GM12878 (cell line): ENCODE measurements at regions of chr10 and their contacts with region 1.

Region 1: GRCh38 chr10:80444646-80445319 is 9.3 kb upstream of the TSPAN14 start:
- DNase-seq: peak; percentile 63
- ATAC-seq: peak; percentile 89
- H3K4me3 ChIP-seq: no peak overlapping the region
- H3K27ac ChIP-seq: no peak overlapping the region
- H3K4me1 ChIP-seq: peaks cover 17% of the 10 kb centered on the region
- H3K27me3 ChIP-seq: no peaks in the 10 kb centered on the region
- CTCF ChIP-seq: peak; percentile 90 to 99 (median 93)
- EP300 ChIP-seq: no peak
- POLR2A ChIP-seq: no peak
- RAD21 ChIP-seq: peak; percentile 100

Region 2: DNA sequence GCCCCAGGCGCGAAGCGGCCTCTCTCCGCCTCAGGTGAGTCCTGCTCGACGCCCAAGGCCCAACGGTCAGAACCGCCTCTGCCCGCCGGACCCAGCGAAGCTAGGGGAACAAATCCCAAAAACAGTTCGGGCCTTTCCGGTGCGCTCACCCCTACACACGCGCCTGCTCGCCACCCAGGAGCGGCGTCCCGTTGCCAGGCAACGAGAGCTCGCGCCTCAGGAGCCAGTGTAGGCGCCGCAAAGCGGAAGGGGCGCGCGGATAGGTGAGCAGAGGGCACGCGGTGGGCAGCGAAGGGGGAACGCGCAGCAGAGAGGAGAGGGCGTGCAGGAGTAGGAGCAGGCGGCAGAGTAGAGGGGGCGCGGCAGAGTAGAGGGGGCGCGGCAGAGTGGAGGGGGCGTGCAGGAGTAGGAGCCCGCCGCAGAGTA is 88.2 kb before region 1 on chr10 and contains the starts of genes DYDC1 and DYDC2:
- CTCF ChIA-PET with region 1: no interaction called
- POLR2A ChIA-PET with region 1: no interaction called
- RAD21 ChIA-PET with region 1: no interaction called
- SMC1A ChIA-PET with region 1: no interaction called
- in situ Hi-C with region 1: no loop called
- intact Hi-C with region 1: no loop called
- DNase-seq: no peak
- ATAC-seq: no peak
- H3K4me3 ChIP-seq: no peak within 1 kb of the TSS
- H3K27ac ChIP-seq: no peak within 1 kb of the TSS
- H3K4me1 ChIP-seq: no peaks in the 10 kb centered on the region
- H3K27me3 ChIP-seq: peaks cover 5 to 11% of the 10 kb centered on the region in 2 experiments
- CTCF ChIP-seq: no peak
- EP300 ChIP-seq: no peak
- POLR2A ChIP-seq: no peak
- RAD21 ChIP-seq: no peak
- polyA plus RNA-seq, gene DYDC1: not detected
- polyA plus RNA-seq, gene DYDC2: not detected

Region 3: GRCh38 chr10:80421707-80422536 is 22.9 kb before region 1 on chr10:
- CTCF ChIA-PET with region 1: interaction called, 32 read pairs
- POLR2A ChIA-PET with region 1: interaction called, 5 read pairs
- RAD21 ChIA-PET with region 1: interaction called, 14 read pairs
- SMC1A ChIA-PET with region 1: interaction called, 26 read pairs
- in situ Hi-C with region 1: no loop called
- intact Hi-C with region 1: no loop called
- DNase-seq: peak; percentile 40
- ATAC-seq: peak; percentile 92
- H3K4me3 ChIP-seq: peak overlapping the region; percentile 23; the same call in 1 of the 2 replicates
- H3K27ac ChIP-seq: peak overlapping the region; percentile 47
- H3K4me1 ChIP-seq: peaks cover 21% of the 10 kb centered on the region
- H3K27me3 ChIP-seq: no peaks in the 10 kb centered on the region
- CTCF ChIP-seq: no peak
- EP300 ChIP-seq: no peak
- POLR2A ChIP-seq: no peak
- RAD21 ChIP-seq: no peak

Region 4: DNA sequence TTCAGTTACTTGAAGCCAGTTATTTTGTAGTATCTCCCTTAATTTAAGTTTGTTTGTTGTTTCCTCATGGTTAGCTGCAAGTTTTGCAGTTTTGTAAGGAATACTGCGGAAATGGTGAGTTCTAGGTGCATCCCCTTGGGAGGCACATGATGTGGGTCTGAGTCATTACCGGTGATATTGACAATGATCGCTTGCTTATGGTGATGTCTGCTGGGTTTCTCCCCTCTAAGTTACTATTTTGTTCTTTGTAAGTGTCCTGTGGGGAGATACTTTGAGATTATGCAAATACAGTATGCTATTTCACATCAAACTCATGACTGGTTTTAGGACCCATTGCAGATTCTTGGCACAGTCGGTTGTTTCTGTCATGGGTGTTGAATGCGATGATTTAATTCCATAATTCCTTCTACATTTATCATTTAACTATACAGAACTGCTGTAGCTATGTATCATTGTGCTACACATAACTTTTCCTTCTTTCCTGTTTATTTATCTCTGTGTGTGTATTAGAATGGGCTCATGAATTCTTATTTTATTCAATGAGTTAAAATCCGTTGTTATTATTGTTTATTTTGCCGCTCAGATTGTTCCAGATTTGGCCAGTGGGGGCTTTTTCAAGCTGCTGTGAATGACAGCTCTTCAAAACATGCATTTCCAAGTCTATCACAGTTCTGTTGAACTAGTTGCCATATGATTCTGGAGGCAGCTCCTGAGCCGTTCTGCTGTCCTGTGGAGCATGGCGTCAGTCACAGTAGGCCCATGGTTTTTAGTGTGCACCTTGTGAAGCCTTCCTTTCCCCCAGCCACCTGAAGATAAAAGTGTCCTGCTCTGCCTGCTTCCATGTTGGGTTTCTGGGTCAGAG is 27.7 kb after region 1 on chr10:
- CTCF ChIA-PET with region 1: interaction called, 24 read pairs
- POLR2A ChIA-PET with region 1: interaction called, 8 read pairs
- RAD21 ChIA-PET with region 1: interaction called, 11 read pairs
- SMC1A ChIA-PET with region 1: interaction called, 87 read pairs
- in situ Hi-C with region 1: no loop called
- intact Hi-C with region 1: no loop called
- DNase-seq: peak; percentile 92
- ATAC-seq: peak; percentile 88
- H3K4me3 ChIP-seq: peak overlapping the region; percentile 35
- H3K27ac ChIP-seq: peak overlapping the region; percentile 87
- H3K4me1 ChIP-seq: peaks cover 65% of the 10 kb centered on the region
- H3K27me3 ChIP-seq: no peaks in the 10 kb centered on the region
- CTCF ChIP-seq: no peak
- EP300 ChIP-seq: peak; percentile 66 to 67; a peak in 2 of 4 replicates
- POLR2A ChIP-seq: no peak
- RAD21 ChIP-seq: no peak

Region 5: DNA sequence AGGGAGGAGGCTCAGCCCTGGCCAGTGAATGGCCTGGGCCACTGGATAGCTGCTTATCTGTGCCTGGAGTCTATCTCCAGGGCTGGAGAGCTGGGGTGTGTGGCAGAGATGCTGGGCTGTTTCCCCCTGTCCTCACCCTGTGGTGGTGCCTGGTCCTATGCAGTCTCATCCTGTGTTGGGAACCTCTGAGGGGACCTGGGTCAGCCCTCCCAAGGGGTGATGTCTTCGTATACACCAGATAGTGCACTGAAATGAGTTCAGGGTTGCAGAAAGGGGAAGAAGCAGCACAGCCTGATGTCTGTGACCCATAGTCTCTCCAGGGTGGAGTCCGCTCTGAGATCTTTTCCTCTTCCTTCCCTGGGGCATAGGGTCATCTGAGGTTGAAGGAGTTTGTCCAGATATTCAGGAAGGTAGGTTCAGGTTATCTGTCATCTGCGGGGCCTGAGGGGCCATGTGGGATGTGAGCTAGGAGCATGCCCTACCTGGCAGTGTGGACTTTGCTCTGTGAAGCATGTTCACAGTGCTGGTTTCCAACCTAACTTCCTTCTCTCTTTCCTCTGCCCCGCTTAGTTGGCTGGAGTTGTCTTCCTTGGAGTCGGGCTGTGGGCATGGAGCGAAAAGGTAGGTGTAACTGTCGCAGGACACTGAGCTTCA is 59.5 kb after region 1 on chr10:
- CTCF ChIA-PET with region 1: interaction called, 852 read pairs
- POLR2A ChIA-PET with region 1: interaction called, 29 read pairs
- RAD21 ChIA-PET with region 1: interaction called, 432 read pairs
- SMC1A ChIA-PET with region 1: interaction called, 1,038 read pairs
- in situ Hi-C with region 1: loop called (anchors 5 kb)
- intact Hi-C with region 1: loop called (anchors 1 kb)
- DNase-seq: no peak
- ATAC-seq: no peak
- H3K4me3 ChIP-seq: no peak overlapping the region
- H3K27ac ChIP-seq: no peak overlapping the region
- H3K4me1 ChIP-seq: peaks cover 31% of the 10 kb centered on the region
- H3K27me3 ChIP-seq: no peaks in the 10 kb centered on the region
- CTCF ChIP-seq: no peak
- EP300 ChIP-seq: no peak
- POLR2A ChIP-seq: no peak
- RAD21 ChIP-seq: no peak

Region 6: DNA sequence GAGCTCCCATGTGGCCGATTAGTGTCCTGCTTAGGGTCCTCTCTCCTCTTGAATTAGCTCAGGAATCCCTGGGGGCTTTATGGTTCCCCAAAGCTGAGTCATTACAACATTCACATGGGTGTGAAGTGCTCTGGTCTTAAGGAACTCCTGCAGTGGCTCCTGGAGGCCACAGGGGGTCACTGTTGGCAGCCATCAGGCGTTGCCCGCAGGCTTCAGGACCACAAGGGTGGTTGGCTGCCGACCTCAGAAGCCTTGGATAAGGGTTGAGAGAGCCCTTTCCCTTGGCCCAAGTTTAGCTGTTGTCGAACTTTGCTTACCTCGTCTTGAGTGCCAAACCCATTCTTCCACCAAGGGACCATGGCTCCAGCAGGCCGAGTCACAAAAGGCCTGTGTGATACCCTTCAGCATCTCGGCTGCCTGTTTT is 154.7 kb after region 1 on chr10:
- CTCF ChIA-PET with region 1: interaction called, 34 read pairs
- POLR2A ChIA-PET with region 1: interaction called, 4 read pairs
- RAD21 ChIA-PET with region 1: interaction called, 26 read pairs
- SMC1A ChIA-PET with region 1: interaction called, 24 read pairs
- in situ Hi-C with region 1: loop called (anchors 10 kb)
- intact Hi-C with region 1: loop called (anchors 2 kb)
- DNase-seq: peak; percentile 57
- ATAC-seq: peak; percentile 79
- H3K4me3 ChIP-seq: no peak overlapping the region
- H3K27ac ChIP-seq: no peak overlapping the region; the same call in 1 of the 2 replicates
- H3K4me1 ChIP-seq: peaks cover 17% of the 10 kb centered on the region
- H3K27me3 ChIP-seq: no peaks in the 10 kb centered on the region
- CTCF ChIP-seq: peak; percentile 75 to 96 (median 90)
- EP300 ChIP-seq: peak in 1 of 2 experiments; percentile 46; a peak in 1 of 4 replicates
- POLR2A ChIP-seq: no peak
- RAD21 ChIP-seq: peak; percentile 71

Region 7: GRCh38 chr10:80924063-80924952 is 479.5 kb after region 1 on chr10:
- CTCF ChIA-PET with region 1: interaction called, 14 read pairs
- POLR2A ChIA-PET with region 1: no interaction called
- RAD21 ChIA-PET with region 1: interaction called, 7 read pairs
- SMC1A ChIA-PET with region 1: interaction called, 8 read pairs
- in situ Hi-C with region 1: loop called (anchors 10 kb)
- intact Hi-C with region 1: loop called (anchors 2 kb)
- DNase-seq: no peak
- ATAC-seq: peak; percentile 81
- H3K4me3 ChIP-seq: no peak overlapping the region
- H3K27ac ChIP-seq: no peak overlapping the region
- H3K4me1 ChIP-seq: no peaks in the 10 kb centered on the region
- H3K27me3 ChIP-seq: no peaks in the 10 kb centered on the region
- CTCF ChIP-seq: peak; percentile 55 to 69 (median 60)
- EP300 ChIP-seq: no peak
- POLR2A ChIP-seq: no peak
- RAD21 ChIP-seq: peak; percentile 57